Activated naive CD4-positive, alpha-beta T cell treated with anti-CD3 and anti-CD28 coated beads for 36 hours (primary cell): ENCODE measurements at regions of chr1 and their contacts with region 1.

Region 1: DNA sequence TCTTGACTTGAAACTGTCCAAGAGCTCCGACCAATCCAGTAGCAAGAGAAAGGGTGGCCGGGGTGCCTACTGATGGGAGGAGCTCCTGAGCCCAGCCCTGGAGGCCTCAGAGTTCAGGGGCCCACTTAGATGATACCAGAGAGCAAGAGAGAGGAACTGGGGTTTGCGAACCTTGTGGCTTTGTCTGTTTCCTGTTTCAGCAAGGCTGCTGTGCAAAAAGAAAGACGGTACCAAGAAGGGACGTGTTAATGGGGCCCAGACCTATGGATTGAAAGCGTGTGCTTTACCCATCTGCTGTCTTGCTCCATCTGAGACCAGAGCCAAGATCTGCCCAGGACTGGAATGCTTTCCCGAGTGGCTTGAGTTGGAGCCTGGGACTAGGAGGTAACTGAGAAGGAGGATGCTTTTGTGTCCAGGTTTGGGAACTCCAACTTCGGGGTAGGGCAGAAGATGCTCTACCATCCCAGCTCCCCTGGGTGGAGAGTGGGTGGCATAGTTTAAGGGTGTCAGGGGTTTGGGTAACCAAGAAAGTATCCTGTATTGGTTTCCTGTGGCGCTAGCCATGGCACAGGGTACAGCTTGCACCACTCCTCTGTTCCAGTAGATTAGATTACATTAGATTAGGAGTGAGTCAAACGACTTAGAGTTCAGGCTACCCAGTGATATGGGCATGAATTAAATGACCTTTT is at the start of gene TRAF3IP3:
- DNase-seq: peak; percentile 90
- H3K4me3 Mint-ChIP-seq: peak within 1 kb of the TSS; percentile 92
- H3K27ac Mint-ChIP-seq: peak within 1 kb of the TSS; percentile 98
- H3K4me1 Mint-ChIP-seq: peaks cover 75% of the 10 kb centered on the region
- H3K27me3 Mint-ChIP-seq: no peaks in the 10 kb centered on the region
- total RNA-seq, gene TRAF3IP3: 107 to 113 TPM

Region 2: GRCh38 chr1:209784265-209785169 is 28.4 kb after region 1 on chr1 and contains the start of gene C1orf74:
- CTCF ChIA-PET with region 1: no interaction called
- intact Hi-C with region 1: loop called (anchors 1 kb)
- DNase-seq: peak; percentile 100
- H3K4me3 Mint-ChIP-seq: peak within 1 kb of the TSS; percentile 92
- H3K27ac Mint-ChIP-seq: peak within 1 kb of the TSS; percentile 97
- H3K4me1 Mint-ChIP-seq: peaks cover 37% of the 10 kb centered on the region
- H3K27me3 Mint-ChIP-seq: no peaks in the 10 kb centered on the region
- total RNA-seq, gene C1orf74: 3.5 to 4.6 TPM

Region 3: DNA sequence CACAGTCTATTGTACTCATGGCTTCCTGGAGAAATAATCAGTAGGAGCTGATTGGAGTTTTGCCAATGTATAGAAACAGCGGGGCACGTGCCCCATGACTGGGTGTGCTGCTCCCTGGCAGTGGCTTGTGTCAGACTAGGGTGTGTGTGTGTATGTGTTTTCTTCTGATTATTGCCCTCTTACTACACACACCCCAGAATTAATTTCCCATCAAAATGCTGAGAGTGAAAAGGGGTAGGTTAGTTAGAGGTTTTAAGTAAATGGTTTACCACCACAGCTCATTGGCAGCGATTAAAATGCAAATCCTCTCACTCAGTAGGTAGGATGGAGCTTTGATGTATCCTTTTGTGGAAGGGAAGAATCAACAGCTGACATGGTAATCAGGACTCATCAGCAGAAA is 602.6 kb after region 1 on chr1:
- CTCF ChIA-PET with region 1: no interaction called
- intact Hi-C with region 1: no loop called
- DNase-seq: no peak
- H3K4me3 Mint-ChIP-seq: no peak overlapping the region
- H3K27ac Mint-ChIP-seq: no peak overlapping the region
- H3K4me1 Mint-ChIP-seq: peaks cover 10% of the 10 kb centered on the region
- H3K27me3 Mint-ChIP-seq: no peaks in the 10 kb centered on the region